CD14-positive monocyte (primary cell): ENCODE measurements at regions of chr6 and their contacts with region 1.

Region 1: DNA sequence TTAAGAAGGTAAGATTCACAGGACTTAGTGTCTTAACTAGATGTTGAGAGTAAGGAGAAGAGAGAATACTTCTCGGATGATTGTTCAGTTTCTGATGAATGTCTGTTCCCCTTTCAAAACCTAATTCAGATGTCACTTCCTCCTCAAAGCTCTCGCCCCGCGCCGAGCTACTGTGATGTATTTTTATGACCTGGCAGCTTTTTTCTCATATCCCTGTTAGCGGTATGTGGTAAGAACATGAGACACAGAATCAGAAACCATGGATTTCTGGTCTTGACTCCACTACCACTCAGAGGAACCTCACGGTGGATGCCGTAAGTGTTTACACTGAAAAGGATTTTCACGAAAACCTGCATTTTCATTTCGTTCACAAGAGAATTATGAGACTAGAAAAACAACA is 48.4 kb downstream of the CEP43 start:
- DNase-seq: peak; percentile 88 to 90 (median 90)
- H3K4me3 ChIP-seq: peak overlapping the region; percentile 2 to 66 (median 36)
- H3K4me3 Mint-ChIP-seq: peak overlapping the region; percentile 49 to 85
- H3K27ac ChIP-seq: peak overlapping the region; percentile 85
- H3K27ac Mint-ChIP-seq: peak overlapping the region; percentile 92 to 98 (median 95)
- H3K4me1 ChIP-seq: peaks cover 22 to 25% of the 10 kb centered on the region in 2 donors
- H3K4me1 Mint-ChIP-seq: peaks cover 26% of the 10 kb centered on the region
- H3K27me3 ChIP-seq: no peaks in the 10 kb centered on the region
- H3K27me3 Mint-ChIP-seq: peaks cover 0 to 2% (median 2%) of the 10 kb centered on the region in 3 donors
- CTCF ChIP-seq: no peak

Region 2: GRCh38 chr6:167141667-167142432 is 94.3 kb after region 1 on chr6:
- intact Hi-C with region 1: loop called in 1 of 2 experiments (anchors 10 kb)
- DNase-seq: peak in 2 of 3 donors; percentile 52 to 55
- H3K4me3 ChIP-seq: no peak overlapping the region
- H3K4me3 Mint-ChIP-seq: peak overlapping the region in 1 of 2 donors; percentile 3
- H3K27ac ChIP-seq: no peak overlapping the region
- H3K27ac Mint-ChIP-seq: peak overlapping the region in 3 of 7 donors; percentile 7 to 52 (median 25)
- H3K4me1 ChIP-seq: peaks cover 0 to 11% of the 10 kb centered on the region in 2 donors
- H3K4me1 Mint-ChIP-seq: peaks cover 18% of the 10 kb centered on the region
- H3K27me3 ChIP-seq: no peaks in the 10 kb centered on the region
- H3K27me3 Mint-ChIP-seq: peaks cover 3 to 4% (median 3%) of the 10 kb centered on the region in 3 donors
- CTCF ChIP-seq: peak; percentile 86